Right ventricle myocardium superior (tissue), 1 donor: ENCODE measurements at regions of chr18 and their contacts with region 1.

Region 1: GRCh38 chr18:60347526-60348045 is 25.0 kb downstream of the MC4R start:
- DNase-seq: no peak
- ATAC-seq: no peak

Region 2: DNA sequence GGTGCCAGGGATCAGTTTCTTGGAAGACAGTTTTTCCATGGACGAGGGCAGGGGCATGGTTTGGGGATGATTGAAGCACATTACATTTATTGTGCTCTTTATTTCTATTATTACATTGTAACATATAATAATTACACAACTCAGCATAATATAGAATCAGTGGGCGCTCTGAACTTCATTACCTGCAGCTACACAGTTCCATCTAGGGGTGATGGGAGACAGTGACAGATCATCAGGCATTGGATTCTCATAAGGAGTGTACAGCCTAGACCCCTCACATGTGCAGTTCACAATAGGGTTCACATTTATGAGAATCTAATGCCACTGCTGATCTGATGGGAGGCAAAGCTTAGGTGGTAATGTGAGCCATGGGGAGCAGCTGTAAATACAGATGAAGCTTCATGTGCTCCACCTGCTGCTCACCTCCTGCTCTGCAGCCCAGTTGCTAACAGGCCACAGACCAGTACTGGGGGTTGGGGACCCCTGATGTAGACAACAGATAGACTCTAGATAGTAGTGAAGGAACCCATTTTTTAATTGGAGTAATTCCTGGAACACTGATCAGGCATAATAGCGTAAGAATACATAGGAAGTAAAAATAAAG is 66.5 kb after region 1 on chr18:
- intact Hi-C with region 1: loop called (anchors 10 kb)
- DNase-seq: no peak
- ATAC-seq: no peak